RWPE1 (cell line): ENCODE measurements at regions of chr1 and their contacts with region 1.

Region 1: DNA sequence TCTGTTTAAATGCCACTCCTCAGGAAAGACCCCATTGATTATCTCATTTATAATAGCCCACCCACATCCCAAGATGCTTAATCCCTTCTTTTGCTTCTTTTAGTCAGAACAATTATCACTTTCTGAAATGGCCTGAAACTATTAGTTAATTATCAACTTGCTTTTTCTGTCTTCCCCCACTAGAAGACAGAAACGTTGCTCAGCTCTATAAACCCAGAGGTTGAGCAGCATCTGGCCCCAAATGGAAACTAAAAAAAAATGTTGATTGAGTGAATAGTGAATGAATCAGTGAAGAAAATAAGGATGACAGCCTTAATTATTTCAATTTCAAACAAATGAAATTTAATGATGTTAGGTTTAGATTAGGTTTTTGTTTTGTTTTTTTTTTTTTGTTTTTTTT is 38.2 kb upstream of the PIGC start:
- DNase-seq: no peak
- H3K27ac ChIP-seq: no peak overlapping the region
- CTCF ChIP-seq: no peak

Region 2: GRCh38 chr1:172466795-172467407 is 15.1 kb before region 1 on chr1:
- CTCF ChIA-PET with region 1: no interaction called
- POLR2A ChIA-PET with region 1: no interaction called
- DNase-seq: no peak
- H3K27ac ChIP-seq: no peak overlapping the region
- CTCF ChIP-seq: no peak

Region 3: DNA sequence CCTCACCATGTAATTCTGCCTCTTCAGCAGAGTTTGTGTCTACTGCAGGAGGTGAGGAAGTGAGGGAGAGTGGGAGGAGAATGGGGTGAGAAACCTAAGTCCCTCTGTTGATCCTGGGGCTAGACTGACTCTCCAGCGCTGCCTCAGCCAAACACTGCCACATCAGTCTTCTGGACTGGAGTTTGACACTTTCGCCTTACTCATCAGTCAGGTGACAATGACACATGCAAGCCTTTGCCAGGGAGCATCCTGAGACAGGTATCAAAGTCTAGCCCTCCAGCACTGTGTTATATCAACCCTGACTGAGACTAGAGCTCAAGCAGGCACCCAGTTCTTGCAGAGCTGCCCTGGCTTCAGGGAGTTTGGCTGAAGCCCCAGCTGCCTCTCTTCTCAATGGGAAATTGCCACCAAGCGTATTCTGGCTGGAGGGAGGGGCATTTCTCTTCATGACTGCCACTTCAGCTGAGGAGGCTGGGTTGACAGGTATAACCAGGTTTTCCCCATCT is 17.6 kb after region 1 on chr1:
- CTCF ChIA-PET with region 1: interaction called, 11 read pairs
- POLR2A ChIA-PET with region 1: no interaction called
- DNase-seq: peak; percentile 17
- H3K27ac ChIP-seq: no peak overlapping the region
- CTCF ChIP-seq: no peak